MCF 10A (cell line): ENCODE measurements at regions of chr1 and their contacts with region 1.

Region 1: GRCh38 chr1:160837558-160838205 is 25.0 kb downstream of the CD244 start:
- DNase-seq: no peak
- H3K4me3 Mint-ChIP-seq: no peak overlapping the region
- H3K27ac Mint-ChIP-seq: no peak overlapping the region
- H3K4me1 Mint-ChIP-seq: no peaks in the 10 kb centered on the region
- H3K27me3 Mint-ChIP-seq: no peaks in the 10 kb centered on the region
- CTCF ChIP-seq: no peak

Region 2: DNA sequence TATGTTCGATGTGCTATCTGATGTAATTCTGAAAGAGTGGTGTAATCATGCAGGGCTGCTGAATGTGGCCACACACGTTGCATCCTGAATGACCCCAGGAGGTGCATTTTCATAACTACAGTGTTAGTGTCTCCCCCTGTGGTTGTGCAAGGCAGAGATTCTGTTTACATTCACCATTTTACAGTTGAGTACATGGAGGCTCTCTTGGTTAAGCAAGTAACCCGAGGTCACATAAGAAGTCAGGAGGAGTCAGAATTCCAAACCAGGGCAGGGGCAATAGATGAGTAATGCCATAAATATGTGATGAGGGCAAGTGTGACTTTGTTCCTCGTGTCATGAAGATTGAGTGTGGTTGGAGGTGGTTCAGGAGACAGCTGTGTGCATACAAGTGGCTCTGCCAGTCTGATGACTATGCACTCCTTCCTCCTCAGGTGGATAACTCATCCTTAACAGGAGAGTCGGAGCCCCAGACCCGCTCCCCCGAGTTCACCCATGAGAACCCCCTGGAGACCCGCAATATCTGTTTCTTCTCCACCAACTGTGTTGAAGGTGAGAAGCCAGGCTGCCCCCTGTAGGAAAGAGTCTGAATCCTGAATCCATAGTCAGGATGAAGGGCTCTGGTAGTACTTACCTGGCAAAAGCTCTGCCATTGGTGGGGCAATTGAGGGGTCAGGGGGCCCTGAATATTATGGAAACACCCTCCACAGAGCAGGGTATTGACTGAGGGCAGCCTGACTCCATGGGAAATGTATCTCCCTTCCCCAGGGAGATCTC is 712.8 kb before region 1 on chr1:
- CTCF ChIA-PET with region 1: no interaction called
- POLR2A ChIA-PET with region 1: no interaction called
- intact Hi-C with region 1: no loop called
- DNase-seq: peak; percentile 94
- H3K4me3 Mint-ChIP-seq: no peak overlapping the region
- H3K27ac Mint-ChIP-seq: peak overlapping the region; percentile 93
- H3K4me1 Mint-ChIP-seq: peaks cover 41% of the 10 kb centered on the region
- H3K27me3 Mint-ChIP-seq: no peaks in the 10 kb centered on the region
- CTCF ChIP-seq: peak; percentile 36

Region 3: GRCh38 chr1:160821628-160822027 is 16.1 kb before region 1 on chr1:
- CTCF ChIA-PET with region 1: interaction called, 46 read pairs
- POLR2A ChIA-PET with region 1: no interaction called
- intact Hi-C with region 1: no loop called
- DNase-seq: no peak
- H3K4me3 Mint-ChIP-seq: no peak overlapping the region
- H3K27ac Mint-ChIP-seq: no peak overlapping the region
- H3K4me1 Mint-ChIP-seq: peaks cover 9% of the 10 kb centered on the region
- H3K27me3 Mint-ChIP-seq: no peaks in the 10 kb centered on the region
- CTCF ChIP-seq: no peak

Region 4: DNA sequence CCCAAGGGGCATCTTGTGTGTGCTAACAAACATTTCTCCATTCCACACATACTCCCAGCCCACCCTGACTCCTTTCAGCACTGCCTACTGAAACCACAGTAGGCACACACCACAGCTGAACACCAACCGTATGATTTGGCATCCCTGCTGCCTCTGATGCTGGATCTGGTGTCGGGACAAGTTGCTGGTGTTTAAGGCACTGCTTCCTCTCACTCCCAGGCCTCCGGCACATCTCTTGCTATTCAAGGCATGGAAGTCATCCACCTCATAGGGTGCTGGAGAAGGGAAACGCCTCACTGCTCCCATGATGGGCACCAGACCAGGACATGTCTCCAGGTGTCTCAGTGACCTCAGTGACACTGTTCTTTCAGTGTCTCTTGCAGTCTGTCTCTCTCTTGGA is 119.3 kb after region 1 on chr1:
- CTCF ChIA-PET with region 1: interaction called, 139 read pairs
- POLR2A ChIA-PET with region 1: interaction called, 20 read pairs
- intact Hi-C with region 1: no loop called
- DNase-seq: no peak
- H3K4me3 Mint-ChIP-seq: no peak overlapping the region
- H3K27ac Mint-ChIP-seq: no peak overlapping the region
- H3K4me1 Mint-ChIP-seq: peaks cover 23% of the 10 kb centered on the region
- H3K27me3 Mint-ChIP-seq: no peaks in the 10 kb centered on the region
- CTCF ChIP-seq: no peak

Region 5: GRCh38 chr1:160997323-160998038 is 159.8 kb after region 1 on chr1:
- CTCF ChIA-PET with region 1: interaction called, 109 read pairs
- POLR2A ChIA-PET with region 1: interaction called, 3 read pairs
- intact Hi-C with region 1: no loop called
- DNase-seq: peak; percentile 74
- H3K4me3 Mint-ChIP-seq: no peak overlapping the region
- H3K27ac Mint-ChIP-seq: no peak overlapping the region
- H3K4me1 Mint-ChIP-seq: peaks cover 35% of the 10 kb centered on the region
- H3K27me3 Mint-ChIP-seq: no peaks in the 10 kb centered on the region
- CTCF ChIP-seq: peak; percentile 44